ENCODE measurements at regions of chr19 and their contacts with region 1.

Region 1: GRCh38 chr19:34120846-34121639 is 51.3 kb upstream of the LSM14A start:
- H3K4me3 Mint-ChIP-seq: no peak overlapping the region
- H3K27ac Mint-ChIP-seq: no peak overlapping the region
- H3K4me1 Mint-ChIP-seq: no peaks in the 10 kb centered on the region
- H3K27me3 Mint-ChIP-seq: peaks cover 11% of the 10 kb centered on the region

Region 2: DNA sequence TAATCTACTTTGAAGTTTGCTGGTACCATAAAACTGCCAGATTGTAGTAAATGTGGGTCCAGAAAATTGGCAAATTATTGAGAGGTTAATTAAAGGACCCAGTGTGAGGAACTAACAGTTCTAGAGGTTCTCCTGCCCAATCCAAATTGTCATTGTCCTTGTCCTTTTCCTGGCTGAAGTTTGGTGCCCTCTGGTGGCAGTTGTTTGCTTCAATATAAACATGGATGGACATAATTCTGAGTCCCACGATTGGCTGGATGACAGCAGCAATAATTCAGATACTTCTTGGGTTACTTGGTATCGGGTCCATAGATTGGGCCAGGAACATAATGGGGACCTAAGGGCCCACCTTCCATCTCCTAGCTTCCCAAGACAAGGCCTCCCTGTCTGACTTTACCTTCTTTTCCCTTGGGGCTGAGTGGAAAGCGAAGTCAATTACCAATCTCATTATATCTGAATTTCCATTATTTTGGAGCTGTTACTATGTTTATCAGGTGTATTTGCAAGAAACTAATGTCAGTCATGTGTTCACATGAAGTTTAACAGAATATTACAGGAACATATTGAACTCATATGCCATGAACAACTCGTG is 99.5 kb after region 1 on chr19:
- intact Hi-C with region 1: loop called (anchors 5 kb)
- H3K4me3 Mint-ChIP-seq: no peak overlapping the region
- H3K27ac Mint-ChIP-seq: no peak overlapping the region
- H3K4me1 Mint-ChIP-seq: peaks cover 30% of the 10 kb centered on the region
- H3K27me3 Mint-ChIP-seq: no peaks in the 10 kb centered on the region